B cell (primary cell): ENCODE measurements at regions of chr1 and their contacts with region 1.

Region 1: DNA sequence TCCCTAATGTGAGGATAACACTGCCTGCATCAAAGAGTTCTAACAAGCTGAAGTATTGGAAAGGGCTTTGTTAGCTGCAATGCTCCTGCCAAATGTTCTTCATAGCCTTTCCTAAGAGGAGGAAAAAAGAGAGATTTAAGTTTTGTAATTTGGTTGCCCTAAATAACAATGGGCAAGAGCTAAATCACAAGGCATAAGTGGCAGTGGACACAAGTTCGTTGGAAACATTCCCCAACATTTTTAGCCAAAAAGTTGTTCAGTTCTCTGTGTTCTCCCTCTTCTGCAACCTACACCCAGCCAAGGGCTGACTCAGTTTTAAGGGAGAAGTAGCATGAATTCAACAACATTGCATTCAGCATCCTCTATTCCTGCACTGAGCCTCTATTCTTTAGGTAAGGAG is 2.6 kb upstream of the UQCRHL start:
- DNase-seq: no peak
- ATAC-seq: no peak
- H3K4me3 ChIP-seq: no peak overlapping the region
- H3K4me3 Mint-ChIP-seq: no peak overlapping the region
- H3K27ac ChIP-seq: no peak overlapping the region
- H3K27ac Mint-ChIP-seq: no peak overlapping the region
- H3K4me1 ChIP-seq: no peaks in the 10 kb centered on the region
- H3K4me1 Mint-ChIP-seq: no peaks in the 10 kb centered on the region
- H3K27me3 ChIP-seq: no peaks in the 10 kb centered on the region
- H3K27me3 Mint-ChIP-seq: no peaks in the 10 kb centered on the region
- CTCF ChIP-seq: no peak

Region 2: GRCh38 chr1:15592285-15592684 is 217.8 kb before region 1 on chr1:
- CTCF ChIA-PET with region 1: no interaction called
- POLR2A ChIA-PET with region 1: no interaction called
- intact Hi-C with region 1: no loop called
- DNase-seq: no peak
- ATAC-seq: no peak
- H3K4me3 ChIP-seq: no peak overlapping the region
- H3K4me3 Mint-ChIP-seq: no peak overlapping the region
- H3K27ac ChIP-seq: no peak overlapping the region
- H3K27ac Mint-ChIP-seq: no peak overlapping the region
- H3K4me1 ChIP-seq: no peaks in the 10 kb centered on the region
- H3K4me1 Mint-ChIP-seq: no peaks in the 10 kb centered on the region
- H3K27me3 ChIP-seq: no peaks in the 10 kb centered on the region
- H3K27me3 Mint-ChIP-seq: no peaks in the 10 kb centered on the region
- CTCF ChIP-seq: no peak

Region 3: GRCh38 chr1:15668089-15668754 is 141.9 kb before region 1 on chr1:
- CTCF ChIA-PET with region 1: no interaction called
- POLR2A ChIA-PET with region 1: no interaction called
- intact Hi-C with region 1: no loop called
- DNase-seq: no peak
- ATAC-seq: no peak
- H3K4me3 ChIP-seq: no peak overlapping the region
- H3K4me3 Mint-ChIP-seq: no peak overlapping the region
- H3K27ac ChIP-seq: no peak overlapping the region
- H3K27ac Mint-ChIP-seq: no peak overlapping the region
- H3K4me1 ChIP-seq: no peaks in the 10 kb centered on the region
- H3K4me1 Mint-ChIP-seq: peaks cover 3% of the 10 kb centered on the region
- H3K27me3 ChIP-seq: no peaks in the 10 kb centered on the region
- H3K27me3 Mint-ChIP-seq: no peaks in the 10 kb centered on the region
- CTCF ChIP-seq: no peak

Region 4: GRCh38 chr1:15691434-15692032 is 118.5 kb before region 1 on chr1:
- CTCF ChIA-PET with region 1: no interaction called
- POLR2A ChIA-PET with region 1: no interaction called
- intact Hi-C with region 1: no loop called
- DNase-seq: no peak
- ATAC-seq: no peak
- H3K4me3 ChIP-seq: no peak overlapping the region
- H3K4me3 Mint-ChIP-seq: no peak overlapping the region
- H3K27ac ChIP-seq: peak overlapping the region in 1 of 2 donors; percentile 48
- H3K27ac Mint-ChIP-seq: peak overlapping the region; percentile 79
- H3K4me1 ChIP-seq: peaks cover 19 to 27% of the 10 kb centered on the region in 2 donors
- H3K4me1 Mint-ChIP-seq: peaks cover 63% of the 10 kb centered on the region
- H3K27me3 ChIP-seq: no peaks in the 10 kb centered on the region
- H3K27me3 Mint-ChIP-seq: no peaks in the 10 kb centered on the region
- CTCF ChIP-seq: no peak

Region 5: DNA sequence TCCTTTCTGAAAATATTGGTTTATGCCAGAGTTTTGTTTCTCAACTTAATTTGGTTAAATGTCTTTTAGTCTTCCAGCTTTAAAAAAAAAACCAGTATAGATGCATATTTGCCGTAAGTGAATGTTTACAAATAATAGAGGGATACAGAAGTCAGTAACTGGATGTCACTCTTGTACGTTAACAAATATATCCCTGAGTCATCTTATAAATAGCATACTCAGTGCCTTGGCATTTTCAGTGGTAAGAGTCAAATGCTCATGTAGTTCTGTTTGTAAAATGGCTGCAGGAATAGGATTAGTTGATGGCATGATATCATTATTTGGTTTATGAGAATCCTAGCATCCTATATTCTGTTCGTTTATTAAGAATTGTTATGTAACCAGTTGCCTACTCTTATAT is 92.8 kb after region 1 on chr1:
- CTCF ChIA-PET with region 1: interaction called, 24 read pairs
- POLR2A ChIA-PET with region 1: interaction called, 6 read pairs
- intact Hi-C with region 1: no loop called
- DNase-seq: no peak
- ATAC-seq: no peak
- H3K4me3 ChIP-seq: no peak overlapping the region
- H3K4me3 Mint-ChIP-seq: no peak overlapping the region
- H3K27ac ChIP-seq: no peak overlapping the region
- H3K27ac Mint-ChIP-seq: no peak overlapping the region
- H3K4me1 ChIP-seq: no peaks in the 10 kb centered on the region
- H3K4me1 Mint-ChIP-seq: peaks cover 27% of the 10 kb centered on the region
- H3K27me3 ChIP-seq: no peaks in the 10 kb centered on the region
- H3K27me3 Mint-ChIP-seq: no peaks in the 10 kb centered on the region
- CTCF ChIP-seq: no peak